ENCODE measurements at regions of chr2 and their contacts with region 1.

Region 1: GRCh38 chr2:65553504-65554074 is 121.2 kb upstream of the SPRED2 start:
- DNase-seq: no peak
- H3K4me3 Mint-ChIP-seq: peak overlapping the region; percentile 59
- H3K27ac Mint-ChIP-seq: peak overlapping the region; percentile 21
- H3K4me1 Mint-ChIP-seq: peaks cover 24% of the 10 kb centered on the region
- H3K27me3 Mint-ChIP-seq: peaks cover 18% of the 10 kb centered on the region
- CTCF ChIP-seq: no peak

Region 2: DNA sequence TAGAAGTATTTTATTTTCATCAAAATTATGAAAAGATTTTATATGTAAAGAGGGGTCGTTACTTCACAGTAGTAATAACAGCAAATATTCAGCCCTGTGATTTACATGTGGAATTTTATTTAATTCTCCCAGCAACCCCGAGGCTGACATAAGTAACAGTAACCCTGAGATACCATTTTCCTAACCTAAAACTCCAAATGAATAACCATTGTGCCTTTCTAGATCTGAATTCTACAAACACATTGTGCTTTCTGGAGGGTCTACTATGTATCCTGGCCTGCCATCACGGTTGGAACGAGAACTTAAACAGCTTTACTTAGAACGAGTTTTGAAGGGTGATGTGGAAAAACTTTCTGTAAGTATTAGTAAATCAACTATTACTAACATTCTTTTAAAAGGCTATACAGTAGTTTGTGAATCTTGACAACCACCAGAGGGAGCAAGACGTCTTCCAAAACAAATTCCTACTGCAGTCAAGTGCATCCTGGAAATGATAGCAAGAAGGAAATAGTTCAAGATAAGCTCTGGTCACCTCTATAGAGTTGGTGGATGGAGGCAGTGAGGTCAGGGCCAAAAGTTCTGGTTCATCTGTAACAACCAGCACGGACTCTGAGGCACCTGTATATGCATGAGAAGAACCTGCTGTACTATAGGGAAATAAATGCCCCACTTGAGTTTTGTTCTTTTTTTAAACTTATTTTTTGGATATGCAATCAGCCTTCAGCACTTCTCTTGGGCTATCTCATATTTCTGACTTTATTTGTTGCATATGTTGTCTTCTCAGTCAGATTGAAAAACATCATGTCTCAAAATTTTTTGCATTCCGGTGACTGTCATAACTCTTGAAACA is 288.5 kb before region 1 on chr2:
- CTCF ChIA-PET with region 1: interaction called, 7 read pairs
- intact Hi-C with region 1: loop called (anchors 1 kb)
- DNase-seq: peak; percentile 43
- H3K4me3 Mint-ChIP-seq: no peak overlapping the region
- H3K27ac Mint-ChIP-seq: no peak overlapping the region
- H3K4me1 Mint-ChIP-seq: no peaks in the 10 kb centered on the region
- H3K27me3 Mint-ChIP-seq: no peaks in the 10 kb centered on the region
- CTCF ChIP-seq: peak; percentile 55

Region 3: DNA sequence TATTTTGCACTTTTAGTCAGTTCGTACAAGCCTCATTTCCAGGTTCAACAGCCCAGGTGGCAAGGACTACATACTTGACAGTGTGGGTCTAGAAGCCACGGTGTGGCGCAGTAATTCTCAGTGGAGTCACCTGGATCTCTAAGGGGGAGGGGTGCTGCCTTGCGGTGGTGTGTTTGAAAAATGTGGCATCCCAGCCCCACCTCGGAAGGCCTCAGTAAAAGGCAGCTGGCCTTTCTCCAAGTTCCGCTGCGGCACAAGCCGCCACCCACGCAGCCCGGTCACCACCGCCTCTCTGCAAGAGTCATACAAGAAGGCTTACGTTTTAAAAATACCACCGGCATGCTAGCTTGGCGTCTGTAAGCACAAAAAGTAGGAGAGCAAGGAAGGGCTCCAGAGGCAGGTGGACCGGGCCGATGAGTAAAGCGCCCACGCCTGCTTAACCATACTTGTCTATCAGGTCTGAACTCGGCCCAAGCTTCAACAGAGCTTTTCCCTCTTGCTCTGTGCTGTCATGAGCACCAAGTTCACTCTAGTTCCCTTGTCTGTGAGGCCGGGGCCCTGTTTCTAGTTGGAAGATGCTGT is 170.7 kb before region 1 on chr2:
- CTCF ChIA-PET with region 1: interaction called, 10 read pairs
- intact Hi-C with region 1: loop called (anchors 2 kb)
- DNase-seq: peak; percentile 92
- H3K4me3 Mint-ChIP-seq: peak overlapping the region; percentile 64
- H3K27ac Mint-ChIP-seq: peak overlapping the region; percentile 80
- H3K4me1 Mint-ChIP-seq: peaks cover 95% of the 10 kb centered on the region
- H3K27me3 Mint-ChIP-seq: no peaks in the 10 kb centered on the region
- CTCF ChIP-seq: no peak

Region 4: GRCh38 chr2:65430603-65431420 is 122.8 kb before region 1 on chr2:
- CTCF ChIA-PET with region 1: no interaction called
- intact Hi-C with region 1: loop called (anchors 2 kb)
- DNase-seq: peak; percentile 70
- H3K4me3 Mint-ChIP-seq: peak overlapping the region; percentile 94
- H3K27ac Mint-ChIP-seq: peak overlapping the region; percentile 61
- H3K4me1 Mint-ChIP-seq: no peaks in the 10 kb centered on the region
- H3K27me3 Mint-ChIP-seq: no peaks in the 10 kb centered on the region
- CTCF ChIP-seq: no peak